GM12878 (cell line): ENCODE measurements at regions of chr4 and their contacts with region 1.

Region 1: DNA sequence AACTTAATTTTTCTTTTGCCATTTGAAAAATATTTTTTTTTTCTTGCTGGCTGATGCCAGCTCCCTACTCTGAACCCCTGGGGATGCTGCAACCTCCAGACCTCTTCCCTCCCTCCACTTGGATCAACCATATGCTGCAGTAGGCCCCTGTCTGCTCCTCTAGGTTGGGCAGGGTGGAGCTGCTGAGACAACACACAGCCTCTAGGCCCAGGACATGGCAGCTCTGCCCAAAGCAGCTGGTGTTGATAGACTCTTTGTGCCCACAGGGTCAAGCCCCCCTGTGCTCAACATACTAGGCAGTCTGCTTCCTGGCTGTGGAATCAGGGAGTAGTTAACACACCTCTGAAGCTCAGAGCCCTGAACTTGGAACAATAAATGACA is 19.9 kb upstream of the CLNK start:
- DNase-seq: no peak
- ATAC-seq: peak; percentile 77
- H3K4me3 ChIP-seq: no peak overlapping the region
- H3K27ac ChIP-seq: no peak overlapping the region; the same call in 1 of the 2 replicates
- H3K4me1 ChIP-seq: no peaks in the 10 kb centered on the region
- H3K27me3 ChIP-seq: no peaks in the 10 kb centered on the region
- CTCF ChIP-seq: no peak
- EP300 ChIP-seq: no peak
- POLR2A ChIP-seq: no peak
- RAD21 ChIP-seq: no peak

Region 2: GRCh38 chr4:10684631-10685030 is 19.8 kb before region 1 on chr4 and contains the start of gene CLNK:
- CTCF ChIA-PET with region 1: interaction called, 6 read pairs
- POLR2A ChIA-PET with region 1: no interaction called
- RAD21 ChIA-PET with region 1: interaction called, 8 read pairs
- SMC1A ChIA-PET with region 1: interaction called, 25 read pairs
- in situ Hi-C with region 1: no loop called
- intact Hi-C with region 1: loop called (anchors 2 kb)
- DNase-seq: peak; percentile 77
- ATAC-seq: peak; percentile 77
- H3K4me3 ChIP-seq: peak within 1 kb of the TSS; percentile 52
- H3K27ac ChIP-seq: peak within 1 kb of the TSS; percentile 80
- H3K4me1 ChIP-seq: peaks cover 27% of the 10 kb centered on the region
- H3K27me3 ChIP-seq: no peaks in the 10 kb centered on the region
- CTCF ChIP-seq: no peak
- EP300 ChIP-seq: no peak
- POLR2A ChIP-seq: peak; percentile 52; the same call in 1 of the 2 replicates
- RAD21 ChIP-seq: peak; percentile 23; the same call in 1 of the 2 replicates
- polyA plus RNA-seq, gene CLNK: 2.1 to 2.6 TPM

Region 3: GRCh38 chr4:10690185-10690907 is 14.1 kb before region 1 on chr4:
- CTCF ChIA-PET with region 1: interaction called, 6 read pairs
- POLR2A ChIA-PET with region 1: interaction called, 3 read pairs
- RAD21 ChIA-PET with region 1: interaction called, 8 read pairs
- SMC1A ChIA-PET with region 1: interaction called, 25 read pairs
- in situ Hi-C with region 1: no loop called
- intact Hi-C with region 1: loop called (anchors 2 kb)
- DNase-seq: no peak
- ATAC-seq: peak; percentile 52
- H3K4me3 ChIP-seq: no peak overlapping the region
- H3K27ac ChIP-seq: peak overlapping the region; percentile 71
- H3K4me1 ChIP-seq: peaks cover 35% of the 10 kb centered on the region
- H3K27me3 ChIP-seq: no peaks in the 10 kb centered on the region
- CTCF ChIP-seq: no peak
- EP300 ChIP-seq: no peak
- POLR2A ChIP-seq: no peak
- RAD21 ChIP-seq: no peak

Region 4: GRCh38 chr4:10715696-10716095 is 11.3 kb after region 1 on chr4:
- CTCF ChIA-PET with region 1: no interaction called
- POLR2A ChIA-PET with region 1: interaction called, 6 read pairs
- RAD21 ChIA-PET with region 1: no interaction called
- SMC1A ChIA-PET with region 1: interaction called, 11 read pairs
- in situ Hi-C with region 1: no loop called
- intact Hi-C with region 1: no loop called
- DNase-seq: no peak
- ATAC-seq: no peak
- H3K4me3 ChIP-seq: no peak overlapping the region
- H3K27ac ChIP-seq: no peak overlapping the region
- H3K4me1 ChIP-seq: no peaks in the 10 kb centered on the region
- H3K27me3 ChIP-seq: no peaks in the 10 kb centered on the region
- CTCF ChIP-seq: no peak
- EP300 ChIP-seq: no peak
- POLR2A ChIP-seq: no peak
- RAD21 ChIP-seq: no peak

Region 5: GRCh38 chr4:10783351-10783750 is 78.9 kb after region 1 on chr4:
- CTCF ChIA-PET with region 1: no interaction called
- POLR2A ChIA-PET with region 1: no interaction called
- RAD21 ChIA-PET with region 1: no interaction called
- SMC1A ChIA-PET with region 1: no interaction called
- in situ Hi-C with region 1: no loop called
- intact Hi-C with region 1: no loop called
- DNase-seq: no peak
- ATAC-seq: no peak
- H3K4me3 ChIP-seq: no peak overlapping the region
- H3K27ac ChIP-seq: no peak overlapping the region
- H3K4me1 ChIP-seq: peaks cover 3% of the 10 kb centered on the region; the same call in 1 of the 2 replicates
- H3K27me3 ChIP-seq: no peaks in the 10 kb centered on the region
- CTCF ChIP-seq: no peak
- EP300 ChIP-seq: no peak
- POLR2A ChIP-seq: no peak
- RAD21 ChIP-seq: no peak